MCF 10A (cell line): ENCODE measurements at regions of chrX and their contacts with region 1.

Region 1: GRCh38 chrX:154040307-154040756 is 20.6 kb upstream of the IRAK1 start:
- DNase-seq: peak; percentile 48
- H3K4me3 Mint-ChIP-seq: no peak overlapping the region
- H3K27ac Mint-ChIP-seq: no peak overlapping the region
- H3K4me1 Mint-ChIP-seq: no peaks in the 10 kb centered on the region
- H3K27me3 Mint-ChIP-seq: peaks cover 56% of the 10 kb centered on the region
- CTCF ChIP-seq: no peak

Region 2: DNA sequence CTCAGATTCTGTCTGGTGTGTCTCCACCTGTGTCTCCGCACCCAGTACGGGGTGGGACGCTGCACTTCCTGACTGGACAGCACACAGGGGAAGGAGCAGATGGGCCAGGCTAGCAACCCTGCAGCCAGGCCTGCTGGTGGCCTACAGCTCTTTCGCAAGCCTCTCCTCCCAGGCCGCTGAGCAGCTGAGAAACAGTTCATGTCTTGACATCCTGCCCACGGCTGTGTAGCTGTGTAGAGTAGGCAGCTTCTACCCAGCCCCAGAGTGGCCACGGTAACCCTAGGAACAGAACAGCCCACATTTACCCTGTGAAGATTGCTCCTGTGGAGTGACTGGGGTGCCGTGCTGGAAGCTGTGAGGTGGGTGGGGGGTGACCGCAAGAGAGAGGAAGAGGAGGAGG is 480.3 kb before region 1 on chrX:
- CTCF ChIA-PET with region 1: no interaction called
- POLR2A ChIA-PET with region 1: no interaction called
- intact Hi-C with region 1: no loop called
- DNase-seq: no peak
- H3K4me3 Mint-ChIP-seq: no peak overlapping the region
- H3K27ac Mint-ChIP-seq: no peak overlapping the region
- H3K4me1 Mint-ChIP-seq: no peaks in the 10 kb centered on the region
- H3K27me3 Mint-ChIP-seq: no peaks in the 10 kb centered on the region
- CTCF ChIP-seq: no peak

Region 3: DNA sequence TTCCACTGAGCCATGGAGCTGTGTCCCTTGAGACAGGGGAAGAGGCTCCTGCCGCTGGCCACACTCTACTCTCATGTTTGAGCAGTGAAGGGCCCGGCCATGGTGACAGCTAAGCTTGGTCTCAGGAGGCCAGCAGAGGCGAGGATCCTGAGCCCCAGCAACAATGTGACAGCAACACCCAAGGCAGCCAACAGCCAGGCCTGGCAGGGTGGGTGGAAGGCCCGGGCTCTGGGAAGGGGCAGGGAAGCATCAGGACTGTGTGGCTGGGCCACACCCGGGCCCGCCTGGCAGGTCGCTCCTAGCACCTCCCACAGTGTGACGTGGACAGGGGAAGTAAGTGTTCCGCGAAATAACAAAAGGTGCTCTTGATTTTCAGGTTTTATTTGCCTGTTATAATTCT is 179.2 kb before region 1 on chrX:
- CTCF ChIA-PET with region 1: no interaction called
- POLR2A ChIA-PET with region 1: no interaction called
- intact Hi-C with region 1: no loop called
- DNase-seq: no peak
- H3K4me3 Mint-ChIP-seq: no peak overlapping the region
- H3K27ac Mint-ChIP-seq: no peak overlapping the region
- H3K4me1 Mint-ChIP-seq: no peaks in the 10 kb centered on the region
- H3K27me3 Mint-ChIP-seq: peaks cover 50% of the 10 kb centered on the region
- CTCF ChIP-seq: no peak

Region 4: DNA sequence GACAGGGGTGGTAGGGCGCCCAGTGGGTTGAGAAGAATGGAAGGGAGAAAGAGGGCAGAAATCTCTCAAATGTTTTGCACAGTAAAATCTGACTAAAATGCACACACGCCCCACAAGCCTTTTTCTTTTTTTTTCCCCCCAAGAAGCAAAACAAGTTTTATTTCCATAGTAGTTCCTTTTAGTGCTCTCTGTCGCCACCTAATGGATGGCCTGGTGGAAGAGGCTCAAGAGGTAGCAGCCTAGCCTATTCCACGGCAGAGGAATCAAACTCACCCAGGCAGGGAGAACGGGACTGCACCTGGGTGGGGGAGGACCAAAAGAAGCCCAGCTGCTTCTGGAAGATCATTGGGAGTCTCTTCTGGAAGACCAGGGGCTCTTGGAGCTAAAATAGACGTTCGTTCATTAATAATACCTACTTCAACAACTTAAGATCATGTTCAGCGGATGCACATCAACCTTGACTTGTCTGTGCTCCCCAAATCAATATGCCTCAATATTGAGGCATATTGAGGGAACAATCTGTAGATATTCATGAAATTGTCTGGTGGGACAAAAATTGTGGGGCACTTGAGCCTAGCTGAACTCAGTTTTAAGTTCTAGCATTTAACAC is 11.0 kb after region 1 on chrX:
- CTCF ChIA-PET with region 1: interaction called, 16 read pairs
- POLR2A ChIA-PET with region 1: interaction called, 3 read pairs
- intact Hi-C with region 1: no loop called
- DNase-seq: peak; percentile 72
- H3K4me3 Mint-ChIP-seq: no peak overlapping the region
- H3K27ac Mint-ChIP-seq: no peak overlapping the region
- H3K4me1 Mint-ChIP-seq: peaks cover 6% of the 10 kb centered on the region
- H3K27me3 Mint-ChIP-seq: peaks cover 57% of the 10 kb centered on the region
- CTCF ChIP-seq: peak; percentile 49